ENCODE measurements at regions of chr19 and their contacts with region 1.

Region 1: DNA sequence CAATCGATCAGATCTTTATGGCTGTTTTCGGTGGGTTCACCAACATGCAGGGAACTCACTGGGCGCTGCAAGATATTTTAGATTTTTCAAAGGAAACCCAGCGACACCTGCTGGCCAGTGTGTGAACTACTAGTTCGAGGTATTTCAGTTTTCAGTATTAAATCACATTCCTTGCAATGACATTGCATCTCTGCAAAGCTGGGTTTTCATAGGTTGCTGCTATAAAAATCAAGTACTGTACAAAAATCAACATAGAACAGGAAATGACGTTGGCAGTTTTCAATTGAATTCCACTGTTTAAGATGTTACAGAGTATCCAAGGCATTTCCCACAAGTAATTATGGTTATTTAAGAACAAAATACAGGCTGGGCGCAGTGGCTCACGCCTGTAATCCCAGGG is 17.6 kb downstream of the LIG1 start:
- DNase-seq: peak; percentile 47 to 95 (median 78)

Region 2: DNA sequence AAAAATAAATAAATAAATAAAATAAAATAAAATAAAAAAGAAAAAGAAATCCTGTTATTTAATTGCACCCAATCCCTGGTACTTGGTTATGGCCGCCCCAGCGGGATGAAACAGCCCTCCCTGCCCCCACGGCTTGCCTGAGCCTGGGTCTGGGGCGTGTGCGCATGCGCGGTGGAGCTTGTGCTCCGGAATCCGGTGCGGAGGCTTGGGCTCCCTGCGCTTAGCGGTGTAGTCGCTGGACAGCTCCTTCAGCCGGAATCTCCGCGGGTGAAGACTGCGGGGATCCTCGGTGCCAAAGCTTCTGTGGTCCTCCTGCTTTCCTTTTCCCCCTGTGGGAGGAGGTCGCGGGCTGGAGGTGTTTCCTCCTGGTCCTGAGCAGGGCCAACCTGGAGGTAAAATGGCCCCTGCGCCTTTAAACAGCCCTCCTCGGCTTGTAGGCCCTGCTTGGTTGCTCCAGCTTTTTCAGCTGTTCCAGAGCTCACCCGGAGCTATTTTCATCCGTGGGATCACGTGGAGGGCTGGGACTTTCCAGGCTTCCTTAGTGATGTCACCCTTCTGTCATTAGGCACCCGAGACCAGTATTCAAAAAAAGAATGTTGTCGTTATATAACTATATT is 42.1 kb before region 1 on chr19 and contains the start of gene PLA2G4C:
- intact Hi-C with region 1: loop called (anchors 1 kb)
- DNase-seq: peak; percentile 83 to 98 (median 89)

Region 3: GRCh38 chr19:48351341-48351752 is 198.8 kb after region 1 on chr19:
- intact Hi-C with region 1: no loop called
- DNase-seq: peak in 6 of 10 donors; percentile 28 to 94 (median 54)

Measured in posterior cingulate gyrus (tissue), 11 donors.